Panc1 (cell line): ENCODE measurements at regions of chr1 and their contacts with region 1.

Region 1: DNA sequence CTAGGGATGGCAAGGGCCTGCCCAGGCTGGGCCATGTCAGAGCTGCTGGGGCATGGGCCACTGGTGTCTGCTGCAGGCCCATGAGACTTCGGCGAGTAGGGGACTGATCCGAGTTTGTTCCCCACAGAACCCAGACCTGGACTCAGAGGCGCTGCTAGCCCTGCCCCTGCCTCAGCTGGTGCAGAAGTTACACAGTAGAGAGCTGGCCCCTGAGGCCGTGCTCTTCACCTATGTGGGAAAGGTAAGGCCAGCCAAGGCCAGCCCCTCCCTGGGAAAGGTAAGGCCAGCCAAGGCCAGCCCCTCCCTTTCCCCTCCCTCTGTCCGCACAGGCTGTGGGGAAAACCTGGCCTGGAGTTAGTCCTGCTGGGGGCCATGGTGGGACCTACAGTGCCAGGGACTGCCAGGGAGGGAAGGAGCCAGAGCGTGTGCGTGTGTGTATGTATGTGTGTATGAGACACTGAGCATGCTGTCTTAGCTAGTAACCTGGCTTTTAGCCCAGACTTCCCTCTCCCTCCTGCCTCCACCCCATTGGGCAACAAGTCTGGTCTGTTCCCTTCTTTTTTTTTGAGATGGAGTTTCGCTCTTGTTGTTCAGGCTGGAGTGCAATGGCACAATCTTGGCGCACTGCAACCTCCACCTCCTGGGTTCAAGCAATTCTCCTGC is 8.0 kb downstream of the FAAH start:
- DNase-seq: no peak
- ATAC-seq: peak; percentile 79
- H3K4me3 ChIP-seq: peak overlapping the region in 1 of 2 experiments; percentile 20; a peak in 1 of 4 replicates
- H3K27ac ChIP-seq: no peak overlapping the region
- H3K4me1 ChIP-seq: peaks cover 14% of the 10 kb centered on the region
- H3K27me3 ChIP-seq: no peaks in the 10 kb centered on the region
- CTCF ChIP-seq: no peak

Region 2: GRCh38 chr1:46489638-46490405 is 87.7 kb after region 1 on chr1 and contains the start of gene DMBX1:
- CTCF ChIA-PET with region 1: interaction called, 12 read pairs
- POLR2A ChIA-PET with region 1: no interaction called
- in situ Hi-C with region 1: no loop called
- intact Hi-C with region 1: no loop called
- DNase-seq: no peak
- ATAC-seq: peak; percentile 91
- H3K4me3 ChIP-seq: peak within 1 kb of the TSS; percentile 46 to 58
- H3K27ac ChIP-seq: no peak within 1 kb of the TSS
- H3K4me1 ChIP-seq: peaks cover 5% of the 10 kb centered on the region; the same call in 1 of the 2 replicates
- H3K27me3 ChIP-seq: no peaks in the 10 kb centered on the region; the same call in 1 of the 2 replicates
- CTCF ChIP-seq: no peak
- total RNA-seq, gene DMBX1: 0.05 TPM

Region 3: GRCh38 chr1:46667782-46668760 is 266.0 kb after region 1 on chr1 and contains the start of gene ATPAF1:
- CTCF ChIA-PET with region 1: interaction called, 10 read pairs
- POLR2A ChIA-PET with region 1: no interaction called
- in situ Hi-C with region 1: no loop called
- intact Hi-C with region 1: no loop called
- DNase-seq: peak; percentile 33
- ATAC-seq: peak; percentile 91
- H3K4me3 ChIP-seq: peak within 1 kb of the TSS; percentile 65 to 94
- H3K27ac ChIP-seq: peak within 1 kb of the TSS; percentile 88
- H3K4me1 ChIP-seq: peaks cover 11% of the 10 kb centered on the region; the same call in 1 of the 2 replicates
- H3K27me3 ChIP-seq: no peaks in the 10 kb centered on the region
- CTCF ChIP-seq: no peak
- total RNA-seq, gene ATPAF1: 39.0 TPM